Activated naive CD4-positive, alpha-beta T cell treated with anti-CD3 and anti-CD28 coated beads for 36 hours (primary cell): ENCODE measurements at regions of chr6 and their contacts with region 1.

Region 1: DNA sequence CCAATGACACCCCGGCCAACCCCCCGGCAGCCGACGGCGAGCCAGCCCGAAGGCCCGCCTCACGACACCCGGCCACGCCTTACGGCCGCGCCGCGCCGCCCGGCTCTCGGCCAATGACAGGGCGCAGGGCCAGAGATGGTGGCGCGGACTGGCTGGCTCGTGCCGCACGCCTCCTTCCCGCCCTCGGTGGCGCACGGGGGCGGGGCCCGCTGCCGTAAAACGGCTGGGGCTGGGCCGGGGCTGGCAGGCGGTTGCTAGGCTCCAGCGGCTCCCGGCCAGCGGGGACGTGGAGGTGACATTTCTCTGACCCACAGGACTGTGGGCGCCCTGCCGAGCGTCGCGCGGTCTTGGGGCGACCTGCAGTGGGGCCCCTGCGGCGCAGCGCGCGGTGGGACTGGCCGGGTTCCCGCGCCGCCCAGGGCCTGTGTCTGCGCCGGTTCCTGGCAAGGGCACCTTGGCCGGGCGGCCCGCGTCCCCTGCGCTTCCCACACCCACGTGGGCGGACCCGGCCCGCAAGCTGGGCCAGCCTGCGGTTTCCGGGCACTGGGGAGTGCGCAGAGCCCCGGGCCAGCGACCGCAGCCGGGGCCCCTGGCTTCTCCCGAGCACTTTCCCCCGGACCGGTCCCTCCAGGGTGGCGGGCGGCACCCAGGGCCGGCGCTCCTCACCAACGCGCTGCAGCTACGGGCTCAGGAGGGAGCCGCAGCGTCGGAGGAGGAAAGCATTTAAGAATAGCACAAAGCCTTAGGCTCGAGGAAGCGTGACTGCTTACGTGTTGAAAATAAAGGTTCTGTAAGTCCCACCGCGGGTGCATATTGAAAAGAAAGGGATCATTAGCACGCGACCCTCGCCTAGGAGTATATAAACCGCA is at the start of gene MPC1:
- DNase-seq: peak; percentile 94
- H3K4me3 Mint-ChIP-seq: peak within 1 kb of the TSS; percentile 85
- H3K27ac Mint-ChIP-seq: peak within 1 kb of the TSS; percentile 50
- H3K4me1 Mint-ChIP-seq: peaks cover 5% of the 10 kb centered on the region
- H3K27me3 Mint-ChIP-seq: no peaks in the 10 kb centered on the region
- total RNA-seq, gene MPC1: 16.6 to 18.7 TPM

Region 2: GRCh38 chr6:165922309-165922794 is 460.8 kb before region 1 on chr6:
- CTCF ChIA-PET with region 1: no interaction called
- intact Hi-C with region 1: no loop called
- DNase-seq: no peak
- H3K4me3 Mint-ChIP-seq: no peak overlapping the region
- H3K27ac Mint-ChIP-seq: no peak overlapping the region
- H3K4me1 Mint-ChIP-seq: no peaks in the 10 kb centered on the region
- H3K27me3 Mint-ChIP-seq: peaks cover 14% of the 10 kb centered on the region

Region 3: GRCh38 chr6:166167801-166168615 is 215.2 kb before region 1 on chr6 and contains the start of gene TBXT:
- CTCF ChIA-PET with region 1: no interaction called
- intact Hi-C with region 1: loop called (anchors 10 kb)
- DNase-seq: peak; percentile 15
- H3K4me3 Mint-ChIP-seq: peak within 1 kb of the TSS; percentile 70
- H3K27ac Mint-ChIP-seq: no peak within 1 kb of the TSS
- H3K4me1 Mint-ChIP-seq: peaks cover 7% of the 10 kb centered on the region
- H3K27me3 Mint-ChIP-seq: peaks cover 59% of the 10 kb centered on the region
- total RNA-seq, gene TBXT: not detected

Region 4: DNA sequence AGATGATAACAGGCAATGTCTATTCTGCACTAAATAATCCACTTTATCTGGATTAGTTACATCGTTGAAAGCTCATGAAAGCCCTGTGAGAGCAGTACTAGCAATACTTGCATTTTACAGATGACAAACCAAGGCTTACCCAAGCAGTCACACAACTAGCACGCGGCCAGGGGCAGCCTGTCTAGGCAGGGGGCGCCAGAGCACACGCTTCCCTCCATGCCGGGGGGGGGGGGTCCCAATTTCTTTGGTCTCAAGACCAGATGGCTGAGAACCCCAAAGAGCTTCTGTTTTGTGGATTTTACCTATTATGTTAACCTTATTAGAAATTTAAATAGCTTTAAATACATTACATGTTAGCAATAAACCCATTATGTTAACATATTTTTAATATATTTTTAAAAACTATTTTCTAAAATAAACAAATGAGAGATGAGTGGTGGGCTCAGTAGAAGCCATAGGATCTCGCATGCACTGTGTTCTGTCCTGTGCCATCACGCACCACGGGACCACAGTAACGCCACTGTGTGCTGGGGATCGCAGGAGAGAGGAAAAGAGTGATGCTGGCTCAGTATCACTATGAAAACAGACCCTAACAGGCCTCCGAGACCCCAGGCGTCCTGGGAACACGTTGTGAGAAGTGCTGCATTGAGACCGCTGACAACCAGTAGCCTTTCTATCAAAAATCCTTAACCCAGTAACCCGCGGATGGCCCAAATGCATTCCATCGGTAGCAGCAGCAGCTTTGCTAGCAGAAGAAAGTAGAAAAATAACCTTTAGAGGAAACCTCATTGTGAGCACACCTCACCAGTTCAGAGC is 69.7 kb before region 1 on chr6:
- CTCF ChIA-PET with region 1: interaction called, 17 read pairs
- intact Hi-C with region 1: loop called (anchors 1 kb)
- DNase-seq: peak; percentile 71
- H3K4me3 Mint-ChIP-seq: no peak overlapping the region
- H3K27ac Mint-ChIP-seq: no peak overlapping the region
- H3K4me1 Mint-ChIP-seq: peaks cover 4% of the 10 kb centered on the region
- H3K27me3 Mint-ChIP-seq: peaks cover 16% of the 10 kb centered on the region

Region 5: GRCh38 chr6:166348305-166348949 is 34.7 kb before region 1 on chr6:
- CTCF ChIA-PET with region 1: interaction called, 12 read pairs
- intact Hi-C with region 1: loop called (anchors 1 kb)
- DNase-seq: no peak
- H3K4me3 Mint-ChIP-seq: no peak overlapping the region
- H3K27ac Mint-ChIP-seq: no peak overlapping the region
- H3K4me1 Mint-ChIP-seq: peaks cover 18% of the 10 kb centered on the region
- H3K27me3 Mint-ChIP-seq: peaks cover under 1% of the 10 kb centered on the region

Region 6: DNA sequence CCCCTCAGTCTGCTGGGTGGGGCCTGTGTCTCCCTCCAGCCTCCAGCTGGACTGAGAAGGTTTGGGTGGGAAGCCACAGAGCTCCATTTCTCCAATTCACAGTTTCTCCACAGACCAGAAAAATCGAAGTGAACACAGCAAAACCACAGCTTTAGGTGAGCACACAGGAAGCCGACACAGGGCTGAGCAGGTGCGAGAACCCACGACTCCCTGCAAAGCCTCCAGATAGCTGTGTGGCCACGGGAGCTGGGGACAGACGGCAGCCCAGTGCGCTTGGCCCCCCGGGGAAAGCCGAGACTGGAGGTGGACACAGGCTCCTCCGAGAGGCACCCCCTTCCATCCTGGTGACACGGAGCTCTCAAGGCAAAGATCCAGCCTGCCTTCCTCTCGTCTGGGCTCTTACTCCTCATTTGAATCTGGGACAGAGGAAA is 28.6 kb after region 1 on chr6:
- CTCF ChIA-PET with region 1: interaction called, 3 read pairs
- intact Hi-C with region 1: loop called (anchors 1 kb)
- DNase-seq: peak; percentile 54
- H3K4me3 Mint-ChIP-seq: peak overlapping the region; percentile 5
- H3K27ac Mint-ChIP-seq: peak overlapping the region; percentile 61
- H3K4me1 Mint-ChIP-seq: peaks cover 59% of the 10 kb centered on the region
- H3K27me3 Mint-ChIP-seq: no peaks in the 10 kb centered on the region

Region 7: GRCh38 chr6:166556871-166557322 is 173.7 kb after region 1 on chr6:
- CTCF ChIA-PET with region 1: no interaction called
- intact Hi-C with region 1: no loop called
- DNase-seq: peak; percentile 21
- H3K4me3 Mint-ChIP-seq: no peak overlapping the region
- H3K27ac Mint-ChIP-seq: no peak overlapping the region
- H3K4me1 Mint-ChIP-seq: peaks cover 5% of the 10 kb centered on the region
- H3K27me3 Mint-ChIP-seq: no peaks in the 10 kb centered on the region

Region 8: GRCh38 chr6:166956444-166957086 is 573.4 kb after region 1 on chr6 and contains the start of gene RNASET2:
- CTCF ChIA-PET with region 1: no interaction called
- intact Hi-C with region 1: loop called (anchors 2 kb)
- DNase-seq: peak; percentile 99
- H3K4me3 Mint-ChIP-seq: peak within 1 kb of the TSS; percentile 86
- H3K27ac Mint-ChIP-seq: peak within 1 kb of the TSS; percentile 95
- H3K4me1 Mint-ChIP-seq: peaks cover 71% of the 10 kb centered on the region
- H3K27me3 Mint-ChIP-seq: no peaks in the 10 kb centered on the region
- total RNA-seq, gene RNASET2: 74.1 to 75.6 TPM